GM10248 (cell line): ENCODE measurements at regions of chr17 and their contacts with region 1.

Region 1: DNA sequence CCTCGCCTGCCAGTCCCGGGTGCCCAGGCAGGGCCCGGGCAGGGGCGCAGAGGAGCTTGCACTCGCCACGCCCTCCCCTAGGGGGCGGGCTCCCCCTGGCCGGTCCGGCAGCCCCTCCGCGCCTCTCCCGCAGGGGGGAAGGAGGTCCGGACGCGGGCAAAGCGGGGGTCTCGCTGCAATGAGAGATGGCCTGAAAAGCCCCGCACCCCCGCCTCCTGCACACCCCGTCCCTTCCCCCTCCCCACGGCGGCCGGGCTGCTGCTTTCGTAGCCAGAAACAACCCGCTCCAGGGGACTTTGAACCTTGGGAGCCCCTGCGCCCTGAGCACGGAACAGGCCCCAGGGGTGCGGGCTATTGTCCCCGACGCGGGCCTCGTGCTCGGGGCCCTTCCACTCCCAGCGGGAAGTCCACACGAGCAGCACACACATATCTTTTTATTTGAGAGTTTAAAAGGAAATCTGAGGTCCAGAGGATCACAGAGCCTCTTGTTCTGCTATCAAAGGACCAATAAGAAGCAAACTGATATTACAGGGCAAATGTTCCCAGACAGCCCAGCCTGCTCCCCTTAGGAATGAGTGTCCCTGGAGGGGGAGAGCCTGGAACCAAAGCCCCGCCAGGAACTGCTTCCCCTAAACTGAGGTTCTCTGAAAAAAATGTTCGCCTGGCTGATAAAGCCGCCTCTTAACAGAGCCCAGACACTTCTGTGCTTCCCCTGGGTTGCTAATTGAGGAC is 5.8 kb upstream of the CBX4 start:
- DNase-seq: peak; percentile 85
- CTCF ChIP-seq: peak; percentile 79

Region 2: DNA sequence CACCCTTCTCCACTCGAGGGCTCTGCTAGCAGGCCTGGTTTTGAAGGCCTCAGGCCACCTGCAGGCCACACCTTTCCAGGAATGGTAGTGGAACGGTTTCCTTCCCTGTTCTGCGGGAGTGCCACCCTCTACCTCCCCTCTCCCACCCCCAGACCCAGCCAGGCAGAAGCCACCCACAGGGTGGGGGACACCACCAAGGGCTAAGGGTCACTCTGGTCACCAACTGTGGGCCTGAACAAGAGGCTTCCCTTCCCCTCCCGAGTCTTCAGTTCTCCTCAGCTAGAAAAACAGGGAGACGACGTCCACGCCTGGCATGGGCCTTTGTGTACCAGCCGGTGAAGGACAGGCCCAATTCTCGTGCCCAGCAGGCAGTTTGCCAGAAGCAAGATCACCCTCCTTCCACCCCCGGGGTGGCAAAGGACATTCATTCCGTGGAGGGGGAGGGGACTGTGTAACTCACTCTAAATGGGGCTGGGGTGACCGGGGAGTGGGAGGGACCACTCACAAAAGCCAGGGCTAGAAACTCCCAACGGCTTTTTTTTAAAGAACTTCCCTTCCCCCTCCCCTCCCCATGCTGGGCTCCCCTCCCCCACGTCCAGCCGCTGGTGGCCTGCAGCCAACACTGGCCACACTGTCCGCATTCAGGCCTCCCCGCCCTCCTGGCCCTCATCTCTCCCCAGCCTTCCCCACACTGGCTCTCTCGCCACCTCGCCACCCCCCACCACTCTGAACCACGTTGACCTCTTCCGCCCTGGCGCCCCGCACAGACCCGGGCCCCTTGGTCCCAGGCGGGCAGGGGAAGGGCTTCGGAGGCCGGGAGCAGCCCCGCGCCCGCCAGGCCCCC is 13.4 kb before region 1 on chr17:
- CTCF ChIA-PET with region 1: interaction called, 12 read pairs
- POLR2A ChIA-PET with region 1: no interaction called
- DNase-seq: no peak
- CTCF ChIP-seq: no peak

Region 3: DNA sequence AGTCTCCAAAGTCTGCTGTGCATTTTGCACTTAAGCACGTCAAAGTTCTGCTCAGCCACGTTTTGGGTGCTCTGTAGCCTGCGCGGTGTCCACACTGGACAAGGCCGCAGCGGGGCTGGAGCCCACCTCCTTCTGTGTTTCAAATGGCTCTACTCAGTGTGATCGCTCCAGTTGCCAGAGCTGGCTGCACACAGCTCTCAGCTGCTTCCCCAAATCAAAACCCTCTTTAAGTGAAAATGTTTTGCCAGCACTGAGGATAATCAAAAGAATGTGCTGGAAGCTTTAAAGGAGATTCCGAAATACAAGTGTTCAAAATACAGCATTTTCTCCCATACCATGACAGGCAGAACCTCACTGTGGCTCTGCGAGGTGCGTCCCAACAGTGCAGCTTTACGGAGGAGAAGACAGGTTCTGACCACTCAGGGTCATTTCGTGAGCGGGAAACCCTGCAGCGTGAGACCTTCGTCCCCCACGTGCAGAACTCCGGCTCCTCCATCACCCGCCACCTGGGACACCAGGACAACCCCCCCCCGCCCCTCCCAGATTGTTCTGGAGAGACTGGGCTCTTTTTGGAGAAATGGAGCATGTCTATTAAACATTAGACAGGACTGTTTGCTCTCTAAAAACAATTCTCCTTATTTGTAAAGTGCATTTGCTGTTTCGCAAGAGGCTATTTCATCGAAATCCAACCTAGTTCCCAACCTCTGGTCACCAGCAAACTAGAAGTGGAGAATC is 174.0 kb after region 1 on chr17:
- CTCF ChIA-PET with region 1: no interaction called
- POLR2A ChIA-PET with region 1: no interaction called
- DNase-seq: no peak
- CTCF ChIP-seq: no peak

Region 4: GRCh38 chr17:80092959-80093358 is 247.9 kb after region 1 on chr17:
- CTCF ChIA-PET with region 1: no interaction called
- POLR2A ChIA-PET with region 1: no interaction called
- DNase-seq: no peak
- CTCF ChIP-seq: no peak